IMR-90 (cell line): ENCODE measurements at regions of chr6 and their contacts with region 1.

Region 1: DNA sequence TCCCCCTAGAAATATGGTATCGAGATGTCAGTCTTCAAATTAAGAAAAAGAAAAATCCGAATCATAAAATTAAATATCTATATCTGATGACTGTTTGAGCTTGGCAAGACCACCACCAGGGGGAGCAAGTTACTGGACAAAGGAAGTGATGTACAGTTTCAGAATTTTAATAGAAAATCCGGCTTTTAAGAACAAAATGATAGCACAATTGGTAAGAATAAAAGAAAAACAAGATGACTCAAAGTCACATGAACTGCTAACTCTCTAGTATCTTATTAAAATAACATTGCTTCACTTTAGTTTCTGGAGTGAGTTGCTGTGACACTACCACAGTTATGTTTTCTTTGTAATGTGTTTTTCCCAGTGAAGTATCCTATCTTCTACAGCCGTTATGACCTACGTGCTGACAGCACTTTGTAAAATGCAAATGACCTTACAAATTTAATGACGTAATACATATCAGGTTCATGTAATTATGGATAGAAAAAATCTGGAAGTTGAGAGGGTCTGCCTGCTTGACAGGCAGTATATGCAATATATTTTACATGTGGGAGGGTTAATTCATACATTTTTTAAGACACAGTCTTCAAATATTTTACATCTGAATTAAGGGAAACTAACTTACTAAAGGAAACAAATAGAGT is 405.3 kb upstream of the HS3ST5 start:
- DNase-seq: peak; percentile 45
- ATAC-seq: no peak
- H3K4me3 ChIP-seq: no peak overlapping the region
- H3K27ac ChIP-seq: no peak overlapping the region
- H3K4me1 ChIP-seq: no peaks in the 10 kb centered on the region
- H3K27me3 ChIP-seq: no peaks in the 10 kb centered on the region
- CTCF ChIP-seq: peak; percentile 66
- POLR2A ChIP-seq: no peak
- RAD21 ChIP-seq: peak; percentile 50

Region 2: DNA sequence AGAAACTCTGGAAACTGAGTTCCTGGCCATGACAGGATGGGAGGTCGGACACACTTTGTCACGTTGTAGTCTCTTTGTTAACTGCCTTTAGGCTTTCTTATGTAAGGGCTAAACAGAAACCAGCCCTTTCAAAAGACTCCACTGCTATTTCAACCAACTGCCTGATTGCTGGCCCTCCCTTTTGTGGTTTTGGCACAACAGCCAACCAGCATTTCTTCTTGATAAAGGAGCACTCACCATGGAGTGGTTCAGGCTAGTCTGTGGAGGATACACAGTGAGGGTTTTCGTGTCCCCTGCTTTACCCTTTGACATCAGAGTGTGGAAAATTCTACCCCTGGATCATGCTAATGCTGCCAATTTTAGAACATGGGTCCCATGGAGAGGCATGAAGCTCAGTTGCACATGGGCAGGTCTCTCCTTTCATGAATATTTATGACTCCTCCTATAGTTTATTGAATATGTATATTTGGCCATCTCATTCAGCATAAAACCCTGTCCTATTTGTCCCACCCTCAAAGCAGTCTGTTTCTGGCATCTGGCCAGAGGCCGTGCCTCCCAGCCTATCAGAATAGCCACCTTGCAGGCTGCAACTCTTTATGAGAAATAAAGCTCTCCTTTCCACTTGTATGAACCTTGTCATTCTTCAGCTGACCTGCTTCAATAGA is 553.6 kb before region 1 on chr6:
- CTCF ChIA-PET with region 1: no interaction called
- POLR2A ChIA-PET with region 1: no interaction called
- dilution Hi-C with region 1: no loop called
- in situ Hi-C with region 1: no loop called
- intact Hi-C with region 1: no loop called
- DNase-seq: peak; percentile 0
- ATAC-seq: no peak
- H3K4me3 ChIP-seq: no peak overlapping the region
- H3K27ac ChIP-seq: no peak overlapping the region
- H3K4me1 ChIP-seq: no peaks in the 10 kb centered on the region
- H3K27me3 ChIP-seq: no peaks in the 10 kb centered on the region
- CTCF ChIP-seq: no peak
- POLR2A ChIP-seq: no peak
- RAD21 ChIP-seq: no peak

Region 3: GRCh38 chr6:114342826-114343780 is 405.0 kb before region 1 on chr6 and contains the start of gene HS3ST5:
- CTCF ChIA-PET with region 1: no interaction called
- POLR2A ChIA-PET with region 1: no interaction called
- dilution Hi-C with region 1: no loop called
- in situ Hi-C with region 1: no loop called
- intact Hi-C with region 1: loop called (anchors 5 kb)
- DNase-seq: peak; percentile 8
- ATAC-seq: peak; percentile 77
- H3K4me3 ChIP-seq: peak within 1 kb of the TSS; percentile 61
- H3K27ac ChIP-seq: no peak within 1 kb of the TSS
- H3K4me1 ChIP-seq: no peaks in the 10 kb centered on the region; the same call in 1 of the 2 replicates
- H3K27me3 ChIP-seq: peaks cover 27% of the 10 kb centered on the region
- CTCF ChIP-seq: peak; percentile 35
- POLR2A ChIP-seq: no peak
- RAD21 ChIP-seq: peak; percentile 46
- total RNA-seq, gene HS3ST5: not detected in 2 replicates

Region 4: DNA sequence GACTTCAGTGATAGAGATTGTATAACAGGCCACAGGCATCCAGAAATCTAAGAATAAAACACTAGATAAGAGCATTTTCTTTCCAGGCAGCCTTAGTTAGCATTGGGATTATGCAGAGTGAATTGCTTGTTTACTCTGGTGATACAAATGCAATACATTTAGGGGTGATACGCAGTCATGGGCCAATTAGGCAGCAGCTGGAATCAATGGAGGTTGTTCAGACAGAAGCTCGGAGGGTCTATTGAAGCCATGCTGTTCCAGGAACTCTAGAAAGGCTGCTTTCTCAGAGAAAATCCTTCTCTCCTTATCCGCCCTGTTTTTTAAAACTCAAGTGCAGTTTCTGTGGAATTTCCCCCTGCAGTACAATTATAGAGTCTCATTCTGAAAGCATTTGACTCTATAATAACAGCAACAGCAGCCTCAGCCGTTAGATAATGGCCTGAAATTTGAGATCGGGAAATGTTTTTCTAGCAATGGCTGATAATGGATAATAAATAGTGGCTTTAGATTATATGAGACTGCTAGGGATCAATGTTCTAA is 41.0 kb before region 1 on chr6:
- CTCF ChIA-PET with region 1: no interaction called
- POLR2A ChIA-PET with region 1: no interaction called
- dilution Hi-C with region 1: no loop called
- in situ Hi-C with region 1: no loop called
- intact Hi-C with region 1: no loop called
- DNase-seq: no peak
- ATAC-seq: no peak
- H3K4me3 ChIP-seq: no peak overlapping the region
- H3K27ac ChIP-seq: no peak overlapping the region
- H3K4me1 ChIP-seq: no peaks in the 10 kb centered on the region
- H3K27me3 ChIP-seq: no peaks in the 10 kb centered on the region
- CTCF ChIP-seq: no peak
- POLR2A ChIP-seq: no peak
- RAD21 ChIP-seq: no peak

Region 5: GRCh38 chr6:114936080-114936479 is 188.0 kb after region 1 on chr6:
- CTCF ChIA-PET with region 1: no interaction called
- POLR2A ChIA-PET with region 1: no interaction called
- dilution Hi-C with region 1: no loop called
- in situ Hi-C with region 1: no loop called
- intact Hi-C with region 1: loop called (anchors 5 kb)
- DNase-seq: no peak
- ATAC-seq: no peak
- H3K4me3 ChIP-seq: no peak overlapping the region
- H3K27ac ChIP-seq: no peak overlapping the region
- H3K4me1 ChIP-seq: no peaks in the 10 kb centered on the region
- H3K27me3 ChIP-seq: no peaks in the 10 kb centered on the region
- CTCF ChIP-seq: no peak
- POLR2A ChIP-seq: no peak
- RAD21 ChIP-seq: no peak

Region 6: GRCh38 chr6:115544765-115545673 is 796.9 kb after region 1 on chr6:
- CTCF ChIA-PET with region 1: no interaction called
- POLR2A ChIA-PET with region 1: no interaction called
- dilution Hi-C with region 1: no loop called
- in situ Hi-C with region 1: no loop called
- intact Hi-C with region 1: loop called (anchors 10 kb)
- DNase-seq: no peak
- ATAC-seq: no peak
- H3K4me3 ChIP-seq: no peak overlapping the region
- H3K27ac ChIP-seq: no peak overlapping the region
- H3K4me1 ChIP-seq: no peaks in the 10 kb centered on the region
- H3K27me3 ChIP-seq: no peaks in the 10 kb centered on the region
- CTCF ChIP-seq: peak; percentile 19; the same call in 1 of the 2 replicates
- POLR2A ChIP-seq: no peak
- RAD21 ChIP-seq: no peak

Region 7: DNA sequence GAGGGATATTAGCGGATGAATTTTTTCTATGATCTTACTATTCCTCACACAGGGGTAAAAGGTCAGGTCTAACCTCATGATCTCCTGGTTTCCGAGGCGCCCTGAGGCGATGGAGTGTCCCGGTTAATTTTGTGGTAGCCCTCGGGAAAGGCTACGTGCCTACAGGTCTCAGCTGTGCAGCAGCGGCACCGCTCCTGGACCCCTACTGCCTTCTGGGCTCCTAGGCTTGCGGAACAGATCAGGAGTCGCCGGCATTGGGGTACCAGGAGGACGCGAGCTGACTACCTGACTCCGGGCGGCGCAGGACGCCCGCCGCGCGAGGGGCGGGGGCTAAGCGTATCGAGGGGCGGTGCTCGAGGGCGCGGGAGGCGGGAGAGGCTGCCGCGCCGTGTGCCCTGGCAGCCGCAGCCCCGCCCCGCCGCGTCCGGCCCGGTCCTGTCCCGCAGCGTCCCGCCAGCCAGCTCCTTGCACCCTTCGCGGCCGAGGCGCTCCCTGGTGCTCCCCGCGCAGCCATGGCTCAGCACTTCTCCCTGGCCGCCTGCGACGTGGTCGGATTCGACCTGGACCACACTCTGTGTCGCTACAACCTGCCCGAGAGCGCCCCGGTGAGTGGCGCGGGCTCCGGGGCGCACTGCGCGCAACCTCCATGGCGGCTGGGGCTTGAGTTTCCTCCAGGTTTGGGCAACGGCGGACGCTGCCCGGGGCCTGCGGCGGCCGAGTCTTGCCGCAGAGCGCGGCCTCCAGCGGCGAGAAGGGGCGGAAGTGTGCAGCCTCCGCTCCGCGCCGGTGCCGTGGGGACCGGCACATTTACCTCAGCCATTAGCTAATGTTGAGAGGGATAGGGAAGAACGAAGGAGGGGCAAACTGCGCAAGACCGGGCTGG is 1352.6 kb after region 1 on chr6 and contains the start of gene NT5DC1:
- CTCF ChIA-PET with region 1: no interaction called
- POLR2A ChIA-PET with region 1: no interaction called
- dilution Hi-C with region 1: no loop called
- in situ Hi-C with region 1: no loop called
- intact Hi-C with region 1: loop called (anchors 10 kb)
- DNase-seq: peak; percentile 67
- ATAC-seq: peak; percentile 96
- H3K4me3 ChIP-seq: peak within 1 kb of the TSS; percentile 89
- H3K27ac ChIP-seq: peak within 1 kb of the TSS; percentile 73
- H3K4me1 ChIP-seq: peaks cover 13% of the 10 kb centered on the region
- H3K27me3 ChIP-seq: no peaks in the 10 kb centered on the region
- CTCF ChIP-seq: no peak; the same call in none of the 2 replicates
- POLR2A ChIP-seq: no peak; the same call in 1 of the 2 replicates
- RAD21 ChIP-seq: peak; percentile 22; the same call in 1 of the 2 replicates
- total RNA-seq, gene NT5DC1: 7.5 and 11.7 TPM in 2 replicates